Transverse colon (tissue), 4 donors: ENCODE measurements at regions of chr13 and their contacts with region 1.

Region 1: GRCh38 chr13:24092108-24092507 is 68.4 kb upstream of the SPATA13 start:
- DNase-seq: no peak
- H3K4me3 ChIP-seq: no peak overlapping the region
- H3K27ac ChIP-seq: no peak overlapping the region
- H3K4me1 ChIP-seq: peaks cover 0 to 9% (median 7%) of the 10 kb centered on the region in 4 donors
- H3K27me3 ChIP-seq: no peaks in the 10 kb centered on the region
- CTCF ChIP-seq: no peak
- EP300 ChIP-seq: no peak
- POLR2A ChIP-seq: no peak

Region 2: DNA sequence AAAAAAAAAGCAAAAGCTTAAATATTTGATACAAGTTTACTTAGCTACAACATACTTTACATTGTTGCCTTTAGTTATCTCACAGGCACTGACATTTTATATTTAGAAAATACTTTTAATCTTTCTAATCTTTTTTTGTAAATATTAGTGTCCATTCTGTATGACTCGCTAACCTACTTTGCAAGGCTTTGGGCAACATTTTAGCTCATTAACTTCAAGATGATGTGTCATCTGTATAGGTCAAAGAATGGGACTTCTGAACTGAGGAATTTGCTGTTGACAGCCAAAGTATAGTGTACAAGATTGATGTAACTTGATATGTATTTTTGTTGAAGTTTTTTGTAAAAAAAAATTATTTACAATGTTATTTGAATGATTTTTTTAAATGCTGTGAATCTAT is 214.5 kb after region 1 on chr13:
- in situ Hi-C with region 1: no loop called
- intact Hi-C with region 1: no loop called
- DNase-seq: no peak
- H3K4me3 ChIP-seq: no peak overlapping the region
- H3K27ac ChIP-seq: peak overlapping the region in 1 of 4 donors; percentile 36
- H3K4me1 ChIP-seq: peaks cover 0 to 10% (median 3%) of the 10 kb centered on the region in 4 donors
- H3K27me3 ChIP-seq: no peaks in the 10 kb centered on the region
- CTCF ChIP-seq: no peak
- EP300 ChIP-seq: no peak
- POLR2A ChIP-seq: no peak

Region 3: DNA sequence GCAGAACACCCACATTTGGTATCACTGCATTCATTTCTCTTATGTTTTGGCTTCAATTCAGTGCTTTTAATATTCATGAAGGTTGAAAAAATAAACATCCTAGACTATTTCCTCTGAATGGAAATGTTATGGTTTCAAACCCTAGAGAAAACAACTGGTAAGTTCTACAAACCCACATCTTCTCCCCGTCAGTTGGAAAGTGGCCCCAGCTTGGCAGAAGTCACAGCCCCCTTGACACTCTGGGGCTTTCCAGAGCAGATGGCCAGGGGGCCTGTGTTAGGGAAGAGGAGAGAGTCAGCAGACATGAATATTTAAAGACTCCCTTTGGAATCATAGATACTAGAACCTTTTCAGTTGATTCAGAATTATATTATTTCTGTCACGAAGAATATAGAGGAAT is 1835.8 kb after region 1 on chr13:
- in situ Hi-C with region 1: no loop called
- intact Hi-C with region 1: loop called (anchors 5 kb)
- DNase-seq: no peak
- H3K4me3 ChIP-seq: no peak overlapping the region
- H3K27ac ChIP-seq: no peak overlapping the region
- H3K4me1 ChIP-seq: no peaks in the 10 kb centered on the region
- H3K27me3 ChIP-seq: no peaks in the 10 kb centered on the region
- CTCF ChIP-seq: no peak
- EP300 ChIP-seq: no peak
- POLR2A ChIP-seq: no peak